GM12878 (cell line): ENCODE measurements at regions of chr13 and their contacts with region 1.

Region 1: GRCh38 chr13:53151336-53152056 is 122.9 kb downstream of the OLFM4 start:
- DNase-seq: peak; percentile 32
- ATAC-seq: peak; percentile 95
- H3K4me3 ChIP-seq: no peak overlapping the region
- H3K27ac ChIP-seq: no peak overlapping the region
- H3K4me1 ChIP-seq: no peaks in the 10 kb centered on the region
- H3K27me3 ChIP-seq: no peaks in the 10 kb centered on the region
- CTCF ChIP-seq: peak; percentile 76 to 89 (median 89)
- EP300 ChIP-seq: no peak
- POLR2A ChIP-seq: no peak
- RAD21 ChIP-seq: peak; percentile 73

Region 2: DNA sequence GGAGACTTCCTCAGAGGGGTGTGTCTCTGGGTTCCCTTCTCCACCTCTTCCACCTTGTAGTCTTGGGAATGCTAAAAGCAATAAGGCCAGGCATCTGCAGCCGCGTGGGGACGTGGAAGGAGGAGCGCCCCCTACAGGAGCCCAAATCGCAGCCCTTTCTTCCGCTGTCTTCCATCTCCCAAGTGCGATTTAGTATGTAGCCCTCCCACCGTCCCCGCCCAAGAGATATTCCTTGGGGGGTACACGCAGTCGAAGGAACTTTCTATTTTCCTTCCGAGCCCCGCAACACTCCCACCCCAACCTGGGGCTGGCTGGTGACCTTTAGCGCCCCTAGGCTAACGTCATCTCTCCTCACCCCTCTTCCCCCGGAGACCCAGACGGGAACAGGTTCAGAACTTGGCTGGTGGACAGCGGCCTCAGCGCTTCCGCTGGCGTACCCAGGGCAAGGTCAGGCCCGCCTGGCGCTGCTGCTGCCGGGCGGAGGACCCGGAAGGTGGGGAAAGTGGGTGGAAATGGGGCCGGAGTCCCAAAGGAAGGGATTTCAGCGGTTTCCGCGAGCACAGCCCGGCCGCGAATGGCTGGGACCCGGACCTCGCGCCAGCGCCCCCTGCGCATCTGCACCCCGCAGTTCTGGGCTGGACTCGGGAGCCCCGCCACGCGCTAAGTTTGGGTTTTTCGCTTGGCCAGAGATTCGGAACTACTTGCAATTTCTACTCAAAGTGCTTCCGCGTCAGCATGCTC is 300.9 kb before region 1 on chr13:
- CTCF ChIA-PET with region 1: no interaction called
- POLR2A ChIA-PET with region 1: no interaction called
- RAD21 ChIA-PET with region 1: no interaction called
- SMC1A ChIA-PET with region 1: no interaction called
- in situ Hi-C with region 1: no loop called
- intact Hi-C with region 1: loop called (anchors 10 kb)
- DNase-seq: no peak
- ATAC-seq: peak; percentile 89
- H3K4me3 ChIP-seq: peak overlapping the region; percentile 58
- H3K27ac ChIP-seq: peak overlapping the region; percentile 92
- H3K4me1 ChIP-seq: peaks cover 25% of the 10 kb centered on the region
- H3K27me3 ChIP-seq: no peaks in the 10 kb centered on the region; a peak in 3 of 4 replicates
- CTCF ChIP-seq: 0 out of 6 replicates have a peak, but pooled peaks of 1 of the 3 experiments have one; percentile 14
- EP300 ChIP-seq: no peak
- POLR2A ChIP-seq: 0 out of 2 replicates have a peak, but pooled peaks have one; percentile 45
- RAD21 ChIP-seq: no peak

Region 3: GRCh38 chr13:53137779-53138178 is 13.7 kb before region 1 on chr13:
- CTCF ChIA-PET with region 1: interaction called, 11 read pairs
- POLR2A ChIA-PET with region 1: no interaction called
- RAD21 ChIA-PET with region 1: interaction called, 3 read pairs
- SMC1A ChIA-PET with region 1: interaction called, 8 read pairs
- in situ Hi-C with region 1: no loop called
- intact Hi-C with region 1: no loop called
- DNase-seq: no peak
- ATAC-seq: no peak
- H3K4me3 ChIP-seq: no peak overlapping the region
- H3K27ac ChIP-seq: no peak overlapping the region
- H3K4me1 ChIP-seq: no peaks in the 10 kb centered on the region
- H3K27me3 ChIP-seq: no peaks in the 10 kb centered on the region
- CTCF ChIP-seq: no peak
- EP300 ChIP-seq: no peak
- POLR2A ChIP-seq: no peak
- RAD21 ChIP-seq: no peak

Region 4: DNA sequence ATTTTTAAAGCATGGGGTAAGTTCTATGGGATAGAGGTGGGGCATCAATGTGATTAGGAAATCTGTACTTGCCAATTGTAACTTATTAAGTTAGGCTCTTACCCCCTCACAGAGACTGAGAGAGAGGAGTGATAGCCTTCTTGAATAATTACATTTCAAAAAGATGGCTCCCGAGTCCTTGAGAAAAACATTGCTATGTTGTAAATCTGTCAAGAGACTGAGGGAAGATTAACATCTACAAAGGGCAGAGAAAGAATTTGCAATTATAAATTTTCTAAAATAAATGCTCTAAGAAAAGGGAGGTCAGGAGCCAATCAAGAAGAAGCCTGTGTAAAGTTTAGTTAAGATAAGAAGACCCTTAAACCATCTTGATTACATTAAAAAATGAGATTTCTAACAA is 1447.9 kb after region 1 on chr13:
- CTCF ChIA-PET with region 1: no interaction called
- POLR2A ChIA-PET with region 1: no interaction called
- RAD21 ChIA-PET with region 1: no interaction called
- SMC1A ChIA-PET with region 1: no interaction called
- in situ Hi-C with region 1: no loop called
- intact Hi-C with region 1: no loop called
- DNase-seq: no peak
- ATAC-seq: no peak
- H3K4me3 ChIP-seq: no peak overlapping the region
- H3K27ac ChIP-seq: no peak overlapping the region
- H3K4me1 ChIP-seq: no peaks in the 10 kb centered on the region
- H3K27me3 ChIP-seq: no peaks in the 10 kb centered on the region
- CTCF ChIP-seq: no peak
- EP300 ChIP-seq: no peak
- POLR2A ChIP-seq: no peak
- RAD21 ChIP-seq: no peak